A673 (cell line): ENCODE measurements at regions of chr19 and their contacts with region 1.

Region 1: DNA sequence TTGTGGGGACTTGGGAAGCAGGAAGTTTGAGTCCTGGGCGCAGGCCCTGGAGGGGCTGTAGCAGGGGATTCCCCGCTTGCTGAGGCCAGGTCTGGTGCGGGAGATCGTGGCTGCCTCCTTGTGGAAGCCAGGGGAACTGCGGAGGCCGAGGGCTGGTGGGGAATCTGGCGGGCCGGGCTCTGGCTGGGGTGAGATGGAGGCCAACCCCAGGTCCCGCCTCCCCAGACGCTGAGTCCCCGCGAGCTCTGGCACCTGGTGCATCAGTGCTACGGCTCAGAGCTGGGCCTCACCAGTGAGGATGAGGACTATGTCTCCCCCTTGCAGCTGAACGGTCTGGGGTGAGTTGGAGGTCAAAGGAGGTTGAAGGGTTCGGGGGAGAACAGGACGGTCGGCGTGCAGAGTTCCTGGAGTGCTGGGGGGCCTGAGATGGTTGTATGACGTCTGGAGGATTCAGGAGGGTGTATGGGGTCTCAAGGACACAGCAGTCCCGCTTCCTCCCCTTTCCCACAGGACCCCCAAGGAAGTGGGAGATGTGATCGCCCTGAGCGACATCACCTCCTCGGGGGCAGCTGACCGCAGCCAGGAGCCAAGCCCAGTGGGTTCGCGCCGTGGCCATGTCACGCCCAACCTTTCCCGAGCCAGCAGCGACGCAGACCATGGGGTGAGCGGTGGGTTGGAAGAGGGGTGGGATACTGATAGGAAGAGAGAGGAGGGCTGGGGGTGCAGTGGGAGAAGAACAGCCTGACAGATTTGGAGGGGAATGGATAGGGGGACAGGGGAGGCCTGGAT is 13.1 kb downstream of the GRAMD1A start:
- DNase-seq: peak; percentile 71
- H3K4me3 ChIP-seq: no peak overlapping the region
- H3K27ac ChIP-seq: no peak overlapping the region
- H3K4me1 ChIP-seq: no peaks in the 10 kb centered on the region
- H3K27me3 ChIP-seq: no peaks in the 10 kb centered on the region
- CTCF ChIP-seq: peak; percentile 85

Region 2: DNA sequence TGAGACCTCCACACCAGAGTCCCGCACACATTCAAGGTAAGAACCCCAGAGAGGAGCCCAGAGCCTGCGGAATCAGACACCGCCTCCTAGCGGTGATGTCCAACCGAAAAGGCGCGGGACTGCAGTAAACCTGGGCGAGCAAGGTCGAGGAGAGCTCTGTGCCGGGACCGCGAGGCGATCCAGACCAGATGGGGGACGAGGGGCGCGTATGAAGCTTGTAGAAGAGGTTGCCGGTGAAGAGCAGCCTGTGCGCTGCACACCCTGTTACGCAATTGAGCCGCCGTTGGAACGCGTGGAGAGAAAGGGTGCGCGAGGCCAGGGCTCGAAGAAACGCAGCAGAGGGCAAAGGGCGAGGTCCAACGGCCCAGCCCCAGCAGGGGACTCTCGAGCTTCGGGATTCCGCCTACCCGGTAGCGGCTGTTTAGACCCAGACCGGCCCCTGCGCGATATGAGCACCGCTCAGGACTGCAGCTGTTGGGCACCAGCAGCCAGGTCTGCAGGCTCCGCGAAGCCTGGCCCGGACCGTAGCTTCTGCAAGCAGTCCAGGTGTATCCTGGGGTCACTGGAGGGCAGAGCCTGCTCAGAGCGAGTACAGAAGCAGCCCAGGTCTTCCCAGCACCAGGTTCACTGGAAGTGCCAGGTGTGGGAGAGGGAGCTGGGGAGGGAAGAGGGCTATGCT is 174.3 kb before region 1 on chr19:
- CTCF ChIA-PET with region 1: no interaction called
- POLR2A ChIA-PET with region 1: no interaction called
- intact Hi-C with region 1: loop called (anchors 10 kb)
- DNase-seq: peak; percentile 11
- H3K4me3 ChIP-seq: no peak overlapping the region
- H3K27ac ChIP-seq: no peak overlapping the region
- H3K4me1 ChIP-seq: no peaks in the 10 kb centered on the region
- H3K27me3 ChIP-seq: peaks cover 11% of the 10 kb centered on the region
- CTCF ChIP-seq: peak; percentile 45; the same call in 1 of the 2 replicates

Region 3: GRCh38 chr19:34974646-34975045 is 38.6 kb before region 1 on chr19:
- CTCF ChIA-PET with region 1: interaction called, 4 read pairs
- POLR2A ChIA-PET with region 1: no interaction called
- intact Hi-C with region 1: loop called (anchors 1 kb)
- DNase-seq: peak; percentile 17
- H3K4me3 ChIP-seq: no peak overlapping the region
- H3K27ac ChIP-seq: no peak overlapping the region
- H3K4me1 ChIP-seq: peaks cover 10% of the 10 kb centered on the region
- H3K27me3 ChIP-seq: no peaks in the 10 kb centered on the region
- CTCF ChIP-seq: no peak